Mammary epithelial cell (primary cell): ENCODE measurements at regions of chr3 and their contacts with region 1.

Region 1: GRCh38 chr3:5304789-5305683 is 117.5 kb downstream of the EDEM1 start:
- DNase-seq: peak; percentile 48
- H3K4me3 ChIP-seq: no peak overlapping the region
- H3K27ac ChIP-seq: no peak overlapping the region
- H3K4me1 ChIP-seq: no peaks in the 10 kb centered on the region
- H3K27me3 ChIP-seq: no peaks in the 10 kb centered on the region
- CTCF ChIP-seq: peak; percentile 63 to 79

Region 2: DNA sequence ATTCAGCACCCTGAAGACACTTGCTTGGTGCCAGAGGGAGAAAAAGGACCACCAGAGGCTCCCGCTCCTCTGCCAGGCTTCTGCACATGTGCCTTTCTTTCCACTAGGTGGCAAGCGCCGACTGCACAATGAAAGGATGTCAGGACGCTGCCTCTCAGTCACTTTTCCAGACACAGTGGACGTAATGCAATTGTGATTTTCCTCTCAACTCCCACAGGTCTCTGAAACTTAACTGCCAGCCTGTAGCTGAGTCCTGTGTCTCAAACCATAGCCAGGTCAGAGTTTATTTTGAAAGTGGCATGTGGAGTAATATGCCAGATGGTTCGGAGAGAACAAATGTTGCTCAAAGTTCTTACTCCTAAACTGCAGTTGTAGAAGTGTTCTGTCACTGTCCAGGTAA is 649.0 kb before region 1 on chr3:
- CTCF ChIA-PET with region 1: no interaction called
- dilution Hi-C with region 1: no loop called
- in situ Hi-C with region 1: no loop called
- intact Hi-C with region 1: loop called (anchors 2 kb)
- DNase-seq: peak; percentile 40
- H3K4me3 ChIP-seq: no peak overlapping the region
- H3K27ac ChIP-seq: no peak overlapping the region
- H3K4me1 ChIP-seq: peaks cover under 1% of the 10 kb centered on the region
- H3K27me3 ChIP-seq: no peaks in the 10 kb centered on the region
- CTCF ChIP-seq: peak; percentile 93 to 95

Region 3: GRCh38 chr3:5136211-5136918 is 168.7 kb before region 1 on chr3:
- CTCF ChIA-PET with region 1: no interaction called
- dilution Hi-C with region 1: no loop called
- in situ Hi-C with region 1: no loop called
- intact Hi-C with region 1: loop called (anchors 5 kb)
- DNase-seq: peak; percentile 64
- H3K4me3 ChIP-seq: no peak overlapping the region
- H3K27ac ChIP-seq: peak overlapping the region; percentile 73
- H3K4me1 ChIP-seq: peaks cover 38% of the 10 kb centered on the region
- H3K27me3 ChIP-seq: no peaks in the 10 kb centered on the region
- CTCF ChIP-seq: peak; percentile 50 to 61

Region 4: GRCh38 chr3:5226783-5227182 is 78.3 kb before region 1 on chr3:
- CTCF ChIA-PET with region 1: no interaction called
- dilution Hi-C with region 1: no loop called
- in situ Hi-C with region 1: no loop called
- intact Hi-C with region 1: loop called (anchors 10 kb)
- DNase-seq: no peak
- H3K4me3 ChIP-seq: no peak overlapping the region
- H3K27ac ChIP-seq: no peak overlapping the region
- H3K4me1 ChIP-seq: no peaks in the 10 kb centered on the region
- H3K27me3 ChIP-seq: no peaks in the 10 kb centered on the region
- CTCF ChIP-seq: peak; percentile 41 to 43

Region 5: GRCh38 chr3:5426094-5426883 is 121.3 kb after region 1 on chr3:
- CTCF ChIA-PET with region 1: no interaction called
- dilution Hi-C with region 1: no loop called
- in situ Hi-C with region 1: no loop called
- intact Hi-C with region 1: loop called (anchors 2 kb)
- DNase-seq: peak; percentile 53
- H3K4me3 ChIP-seq: no peak overlapping the region
- H3K27ac ChIP-seq: no peak overlapping the region
- H3K4me1 ChIP-seq: no peaks in the 10 kb centered on the region
- H3K27me3 ChIP-seq: no peaks in the 10 kb centered on the region
- CTCF ChIP-seq: peak; percentile 90 to 92

Region 6: GRCh38 chr3:6799264-6799915 is 1494.4 kb after region 1 on chr3:
- CTCF ChIA-PET with region 1: no interaction called
- dilution Hi-C with region 1: no loop called
- in situ Hi-C with region 1: loop called (anchors 25 kb)
- intact Hi-C with region 1: loop called (anchors 1 kb)
- DNase-seq: peak; percentile 18
- H3K4me3 ChIP-seq: no peak overlapping the region
- H3K27ac ChIP-seq: no peak overlapping the region
- H3K4me1 ChIP-seq: no peaks in the 10 kb centered on the region
- H3K27me3 ChIP-seq: no peaks in the 10 kb centered on the region
- CTCF ChIP-seq: peak; percentile 88 to 94

Region 7: GRCh38 chr3:7144696-7145308 is 1839.8 kb after region 1 on chr3:
- CTCF ChIA-PET with region 1: no interaction called
- dilution Hi-C with region 1: no loop called
- in situ Hi-C with region 1: no loop called
- intact Hi-C with region 1: loop called (anchors 5 kb)
- DNase-seq: peak; percentile 12
- H3K4me3 ChIP-seq: no peak overlapping the region
- H3K27ac ChIP-seq: no peak overlapping the region
- H3K4me1 ChIP-seq: no peaks in the 10 kb centered on the region
- H3K27me3 ChIP-seq: no peaks in the 10 kb centered on the region
- CTCF ChIP-seq: peak; percentile 49 to 66